CD8-positive, alpha-beta T cell (primary cell): ENCODE measurements at regions of chr3 and their contacts with region 1.

Region 1: DNA sequence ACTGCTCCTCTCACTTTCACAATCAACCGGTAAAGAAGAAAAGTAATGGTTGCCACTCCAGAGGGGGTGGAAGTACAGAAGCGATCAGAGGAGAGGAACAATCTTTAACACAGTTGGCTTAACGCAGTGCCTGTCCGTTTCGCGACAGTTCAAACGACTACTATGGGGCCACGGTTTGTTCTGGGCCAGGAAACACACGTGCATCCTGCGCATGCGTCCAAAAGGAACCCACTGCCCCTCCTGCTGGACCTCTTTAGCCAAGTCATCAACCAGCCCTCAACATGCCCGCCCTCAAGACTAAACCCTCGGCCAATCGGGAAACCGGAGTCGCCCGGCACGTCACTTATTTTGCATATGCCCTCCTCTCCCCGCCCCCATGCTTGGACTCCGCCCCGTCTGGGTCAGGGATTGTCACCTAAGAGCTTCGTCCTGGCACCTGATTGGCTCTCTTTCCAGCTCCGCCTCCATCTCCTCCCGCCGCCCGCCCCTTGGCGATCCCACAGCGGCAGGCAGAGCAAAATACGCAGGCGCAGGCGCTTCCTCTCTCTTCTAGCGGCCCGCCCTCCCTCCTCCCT is 345 bp upstream of the CDV3 start:
- DNase-seq: peak; percentile 100
- ATAC-seq: peak; percentile 83
- H3K4me3 ChIP-seq: peak overlapping the region; percentile 45 to 58
- H3K4me3 Mint-ChIP-seq: peak overlapping the region; percentile 89
- H3K27ac ChIP-seq: peak overlapping the region; percentile 76 to 93
- H3K27ac Mint-ChIP-seq: peak overlapping the region; percentile 99
- H3K4me1 ChIP-seq: peaks cover 38% of the 10 kb centered on the region
- H3K4me1 Mint-ChIP-seq: peaks cover 58% of the 10 kb centered on the region
- H3K27me3 ChIP-seq: no peaks in the 10 kb centered on the region
- H3K27me3 Mint-ChIP-seq: no peaks in the 10 kb centered on the region
- CTCF ChIP-seq: no peak

Region 2: GRCh38 chr3:132659365-132660051 is 913.6 kb before region 1 on chr3 and contains the start of gene ACAD11:
- CTCF ChIA-PET with region 1: no interaction called
- POLR2A ChIA-PET with region 1: no interaction called
- intact Hi-C with region 1: loop called (anchors 2 to 5 kb)
- DNase-seq: peak in 8 of 9 experiments; percentile 2 to 68 (median 29)
- ATAC-seq: peak; percentile 26
- H3K4me3 ChIP-seq: peak within 1 kb of the TSS; percentile 80 to 94
- H3K4me3 Mint-ChIP-seq: peak within 1 kb of the TSS; percentile 96
- H3K27ac ChIP-seq: peak within 1 kb of the TSS; percentile 83 to 89
- H3K27ac Mint-ChIP-seq: peak within 1 kb of the TSS; percentile 98
- H3K4me1 ChIP-seq: peaks cover 35% of the 10 kb centered on the region
- H3K4me1 Mint-ChIP-seq: peaks cover 69% of the 10 kb centered on the region
- H3K27me3 ChIP-seq: no peaks in the 10 kb centered on the region
- H3K27me3 Mint-ChIP-seq: no peaks in the 10 kb centered on the region
- CTCF ChIP-seq: peak; percentile 8
- total RNA-seq, gene ACAD11: 30.0 to 31.6 TPM

Region 3: GRCh38 chr3:133443649-133444422 is 129.3 kb before region 1 on chr3:
- CTCF ChIA-PET with region 1: interaction called, 3 read pairs
- POLR2A ChIA-PET with region 1: interaction called, 3 read pairs
- intact Hi-C with region 1: loop called (anchors 5 kb)
- DNase-seq: no peak
- ATAC-seq: no peak
- H3K4me3 ChIP-seq: no peak overlapping the region
- H3K4me3 Mint-ChIP-seq: no peak overlapping the region
- H3K27ac ChIP-seq: no peak overlapping the region
- H3K27ac Mint-ChIP-seq: peak overlapping the region; percentile 3
- H3K4me1 ChIP-seq: peaks cover 14% of the 10 kb centered on the region
- H3K4me1 Mint-ChIP-seq: peaks cover 33% of the 10 kb centered on the region
- H3K27me3 ChIP-seq: no peaks in the 10 kb centered on the region
- H3K27me3 Mint-ChIP-seq: no peaks in the 10 kb centered on the region
- CTCF ChIP-seq: no peak

Region 4: DNA sequence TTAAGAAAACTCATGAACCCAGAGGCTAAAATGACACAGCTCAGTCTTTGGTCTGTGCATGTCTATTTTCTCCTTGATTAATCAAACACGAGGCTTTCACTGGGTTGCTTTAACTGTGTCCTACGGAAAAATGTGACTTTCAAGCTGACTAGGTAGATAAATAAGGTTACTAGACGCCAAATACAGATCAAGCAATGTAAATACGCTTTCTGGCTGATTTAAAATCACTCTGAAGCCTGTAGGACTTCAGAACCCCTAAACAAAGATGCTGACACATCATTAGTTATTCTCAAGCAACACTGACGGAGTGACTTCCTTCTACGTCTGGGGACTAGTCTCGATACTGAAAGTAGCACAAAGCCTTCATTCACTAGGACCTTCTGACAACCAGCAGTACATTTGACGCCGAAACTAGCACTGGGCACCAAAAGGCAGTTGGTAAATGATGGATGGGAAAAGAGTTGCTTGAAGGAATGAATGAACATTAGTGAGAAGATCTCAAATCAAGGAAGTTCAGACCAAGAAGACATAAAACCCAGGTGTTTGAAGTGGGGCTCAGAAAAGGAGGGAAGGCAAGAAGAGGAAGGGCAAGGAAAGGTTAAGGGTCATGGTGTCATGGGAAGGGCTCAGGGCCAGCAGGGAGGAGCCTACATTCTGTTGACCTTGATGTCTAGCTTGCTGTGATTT is 66.8 kb before region 1 on chr3:
- CTCF ChIA-PET with region 1: interaction called, 7 read pairs
- POLR2A ChIA-PET with region 1: interaction called, 24 read pairs
- intact Hi-C with region 1: loop called (anchors 5 kb)
- DNase-seq: peak in 4 of 9 experiments; percentile 23 to 70 (median 56)
- ATAC-seq: peak; percentile 94
- H3K4me3 ChIP-seq: peak overlapping the region; percentile 9 to 30
- H3K4me3 Mint-ChIP-seq: peak overlapping the region; percentile 74
- H3K27ac ChIP-seq: peak overlapping the region; percentile 30 to 69
- H3K27ac Mint-ChIP-seq: peak overlapping the region; percentile 88
- H3K4me1 ChIP-seq: peaks cover 13% of the 10 kb centered on the region
- H3K4me1 Mint-ChIP-seq: peaks cover 16% of the 10 kb centered on the region
- H3K27me3 ChIP-seq: no peaks in the 10 kb centered on the region
- H3K27me3 Mint-ChIP-seq: no peaks in the 10 kb centered on the region
- CTCF ChIP-seq: no peak

Region 5: DNA sequence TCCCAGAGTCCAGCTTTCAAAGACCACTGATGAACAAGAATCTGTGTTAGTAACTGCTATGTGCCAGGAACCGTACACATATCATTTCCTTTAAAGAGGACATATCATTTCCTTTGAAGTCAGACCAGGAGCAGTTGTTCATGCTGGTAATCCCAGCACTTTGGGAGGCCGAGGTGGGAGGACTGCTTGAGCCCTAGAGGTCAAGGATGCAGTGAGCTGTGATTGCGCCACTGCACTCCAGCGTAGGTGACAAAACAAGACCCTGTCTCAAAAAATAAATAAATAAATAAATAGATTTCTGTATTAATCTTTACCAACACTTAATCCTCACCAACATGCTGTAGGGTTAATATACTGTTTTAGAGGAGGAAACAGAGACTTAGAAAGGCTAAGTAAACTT is 23.6 kb before region 1 on chr3:
- CTCF ChIA-PET with region 1: no interaction called
- POLR2A ChIA-PET with region 1: no interaction called
- intact Hi-C with region 1: no loop called
- DNase-seq: no peak
- ATAC-seq: no peak
- H3K4me3 ChIP-seq: no peak overlapping the region
- H3K4me3 Mint-ChIP-seq: no peak overlapping the region
- H3K27ac ChIP-seq: no peak overlapping the region
- H3K27ac Mint-ChIP-seq: no peak overlapping the region
- H3K4me1 ChIP-seq: no peaks in the 10 kb centered on the region
- H3K4me1 Mint-ChIP-seq: no peaks in the 10 kb centered on the region
- H3K27me3 ChIP-seq: no peaks in the 10 kb centered on the region
- H3K27me3 Mint-ChIP-seq: no peaks in the 10 kb centered on the region
- CTCF ChIP-seq: no peak

Region 6: GRCh38 chr3:133661454-133662277 is 88.5 kb after region 1 on chr3 and contains the start of gene TOPBP1:
- CTCF ChIA-PET with region 1: interaction called, 4 read pairs
- POLR2A ChIA-PET with region 1: interaction called, 7 read pairs
- intact Hi-C with region 1: loop called (anchors 1 to 2 kb)
- DNase-seq: peak; percentile 58 to 92 (median 87)
- ATAC-seq: peak; percentile 82
- H3K4me3 ChIP-seq: peak within 1 kb of the TSS; percentile 86 to 90
- H3K4me3 Mint-ChIP-seq: peak within 1 kb of the TSS; percentile 98
- H3K27ac ChIP-seq: peak within 1 kb of the TSS; percentile 83 to 85
- H3K27ac Mint-ChIP-seq: peak within 1 kb of the TSS; percentile 98
- H3K4me1 ChIP-seq: peaks cover 26% of the 10 kb centered on the region
- H3K4me1 Mint-ChIP-seq: peaks cover 45% of the 10 kb centered on the region
- H3K27me3 ChIP-seq: no peaks in the 10 kb centered on the region
- H3K27me3 Mint-ChIP-seq: no peaks in the 10 kb centered on the region
- CTCF ChIP-seq: no peak
- total RNA-seq, gene TOPBP1: 32.4 to 33.9 TPM

Region 7: DNA sequence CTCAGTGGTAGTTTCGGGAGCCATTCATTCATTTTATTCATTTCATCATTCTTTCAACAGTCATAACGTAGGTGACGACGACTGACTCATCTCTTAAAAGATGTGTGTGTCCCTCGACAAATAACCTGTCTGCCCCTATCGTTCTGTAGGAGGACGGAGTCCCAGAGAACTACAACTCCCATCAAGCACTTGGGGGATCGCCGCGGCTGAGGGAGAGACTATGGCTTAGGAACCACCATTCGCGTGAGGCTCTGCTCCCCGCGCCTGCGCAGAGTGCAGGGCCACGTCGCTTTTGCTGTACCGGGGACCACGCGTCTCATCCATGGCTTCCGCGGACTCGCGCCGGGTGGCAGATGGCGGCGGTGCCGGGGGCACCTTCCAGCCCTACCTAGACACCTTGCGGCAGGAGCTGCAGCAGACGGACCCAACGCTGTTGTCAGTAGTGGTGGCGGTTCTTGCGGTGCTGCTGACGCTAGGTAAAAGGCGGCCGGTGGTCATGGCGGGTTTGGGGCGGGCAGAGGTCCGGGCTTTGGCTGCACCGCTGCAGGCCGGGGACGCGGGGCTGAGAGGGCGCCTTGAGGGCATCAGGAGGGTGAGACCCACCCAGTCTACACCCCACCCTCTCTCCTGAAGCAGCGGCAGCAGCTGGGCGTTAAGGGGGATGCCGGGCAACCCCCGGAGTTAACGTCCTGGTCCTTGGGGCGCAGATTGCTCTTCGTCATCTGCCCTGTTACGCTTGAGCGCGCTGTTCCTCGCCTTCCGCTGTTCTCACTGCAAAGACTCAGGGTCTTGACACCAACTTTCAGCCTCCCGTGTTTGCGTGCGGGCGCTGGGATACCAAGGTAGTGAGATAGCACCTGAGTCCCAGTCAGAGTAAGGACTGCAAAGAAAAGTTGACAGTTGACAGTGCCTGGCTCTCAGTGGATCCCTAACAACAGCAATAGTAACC is 232.7 kb after region 1 on chr3 and contains the start of gene SRPRB:
- CTCF ChIA-PET with region 1: no interaction called
- POLR2A ChIA-PET with region 1: no interaction called
- intact Hi-C with region 1: loop called (anchors 1 to 5 kb)
- DNase-seq: peak; percentile 92 to 98 (median 95)
- ATAC-seq: peak; percentile 94
- H3K4me3 ChIP-seq: peak within 1 kb of the TSS; percentile 81 to 91
- H3K4me3 Mint-ChIP-seq: peak within 1 kb of the TSS; percentile 97
- H3K27ac ChIP-seq: peak within 1 kb of the TSS; percentile 77 to 81
- H3K27ac Mint-ChIP-seq: peak within 1 kb of the TSS; percentile 96
- H3K4me1 ChIP-seq: peaks cover 18% of the 10 kb centered on the region
- H3K4me1 Mint-ChIP-seq: peaks cover 37% of the 10 kb centered on the region
- H3K27me3 ChIP-seq: no peaks in the 10 kb centered on the region
- H3K27me3 Mint-ChIP-seq: peaks cover 4% of the 10 kb centered on the region
- CTCF ChIP-seq: no peak
- total RNA-seq, gene SRPRB: 25.7 to 30.1 TPM

Region 8: GRCh38 chr3:133851266-133851906 is 278.2 kb after region 1 on chr3:
- CTCF ChIA-PET with region 1: no interaction called
- POLR2A ChIA-PET with region 1: no interaction called
- intact Hi-C with region 1: no loop called
- DNase-seq: no peak
- ATAC-seq: no peak
- H3K4me3 ChIP-seq: no peak overlapping the region
- H3K4me3 Mint-ChIP-seq: no peak overlapping the region
- H3K27ac ChIP-seq: no peak overlapping the region
- H3K27ac Mint-ChIP-seq: no peak overlapping the region
- H3K4me1 ChIP-seq: no peaks in the 10 kb centered on the region
- H3K4me1 Mint-ChIP-seq: no peaks in the 10 kb centered on the region
- H3K27me3 ChIP-seq: no peaks in the 10 kb centered on the region
- H3K27me3 Mint-ChIP-seq: no peaks in the 10 kb centered on the region
- CTCF ChIP-seq: no peak

Region 9: DNA sequence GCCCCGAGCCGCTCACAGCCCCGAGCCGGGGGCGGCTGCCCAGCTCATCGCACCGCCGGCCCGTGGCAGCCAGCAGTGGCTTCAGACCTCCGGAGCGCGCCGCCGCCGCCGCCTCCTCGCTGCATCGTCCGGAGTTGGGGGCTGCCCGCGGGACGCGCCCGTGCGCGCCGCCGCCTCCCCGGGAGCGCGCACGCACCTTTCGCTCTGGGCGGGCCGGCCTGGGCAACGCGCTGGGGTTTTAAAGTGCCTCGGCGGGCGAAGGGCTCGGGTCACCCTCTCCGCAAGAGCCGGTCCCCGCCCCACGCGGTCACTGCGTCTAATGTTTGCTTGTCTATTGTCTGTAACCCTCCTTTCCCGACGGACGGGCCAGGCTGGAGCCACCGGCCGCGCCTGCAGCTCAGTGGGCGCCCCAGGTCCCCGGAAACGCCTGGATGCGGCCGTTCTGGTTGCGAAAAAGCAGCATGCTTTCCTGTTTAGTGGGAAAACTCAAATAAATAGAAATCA is 677.6 kb after region 1 on chr3 and contains the start of gene RYK:
- CTCF ChIA-PET with region 1: no interaction called
- POLR2A ChIA-PET with region 1: no interaction called
- intact Hi-C with region 1: loop called in 1 of 2 experiments (anchors 2 kb)
- DNase-seq: peak; percentile 50 to 89 (median 73)
- ATAC-seq: peak; percentile 74
- H3K4me3 ChIP-seq: peak within 1 kb of the TSS; percentile 76 to 86
- H3K4me3 Mint-ChIP-seq: peak within 1 kb of the TSS; percentile 94
- H3K27ac ChIP-seq: peak within 1 kb of the TSS; percentile 65 to 68
- H3K27ac Mint-ChIP-seq: peak within 1 kb of the TSS; percentile 94
- H3K4me1 ChIP-seq: peaks cover 17% of the 10 kb centered on the region
- H3K4me1 Mint-ChIP-seq: peaks cover 44% of the 10 kb centered on the region
- H3K27me3 ChIP-seq: no peaks in the 10 kb centered on the region
- H3K27me3 Mint-ChIP-seq: no peaks in the 10 kb centered on the region
- CTCF ChIP-seq: no peak
- total RNA-seq, gene RYK: 63.6 to 64.7 TPM